IMR-90 (cell line): ENCODE measurements at regions of chrX and their contacts with region 1.

Region 1: DNA sequence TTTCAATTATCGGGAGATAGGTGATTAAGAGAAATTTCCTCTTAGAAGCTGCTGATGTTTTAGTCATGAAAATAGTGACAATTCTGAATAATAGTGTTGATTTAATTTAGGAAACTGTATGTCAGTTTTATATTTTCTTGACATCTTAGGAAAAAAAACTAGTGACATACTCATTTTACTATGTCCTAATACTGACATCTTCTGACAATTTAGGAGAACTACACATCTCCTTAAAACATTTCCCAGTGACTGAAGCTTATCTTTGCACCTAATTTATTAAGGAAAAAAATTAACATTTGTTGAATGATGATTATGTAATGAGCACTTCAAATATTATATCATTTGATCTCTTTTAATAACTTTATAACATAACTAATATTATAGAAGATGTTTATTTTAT is 42.0 kb upstream of the RBMXL3 start:
- DNase-seq: peak; percentile 40
- ATAC-seq: peak; percentile 44; the same call in 1 of the 2 replicates
- H3K4me3 ChIP-seq: no peak overlapping the region
- H3K27ac ChIP-seq: no peak overlapping the region
- H3K4me1 ChIP-seq: no peaks in the 10 kb centered on the region
- H3K27me3 ChIP-seq: no peaks in the 10 kb centered on the region
- CTCF ChIP-seq: peak; percentile 62
- POLR2A ChIP-seq: no peak
- RAD21 ChIP-seq: peak; percentile 60

Region 2: GRCh38 chrX:114611018-114611619 is 536.1 kb before region 1 on chrX:
- CTCF ChIA-PET with region 1: interaction called, 4 read pairs
- POLR2A ChIA-PET with region 1: no interaction called
- dilution Hi-C with region 1: no loop called
- in situ Hi-C with region 1: loop called (anchors 25 kb)
- intact Hi-C with region 1: loop called (anchors 1 kb)
- DNase-seq: peak; percentile 35
- ATAC-seq: peak; percentile 59
- H3K4me3 ChIP-seq: no peak overlapping the region
- H3K27ac ChIP-seq: no peak overlapping the region
- H3K4me1 ChIP-seq: no peaks in the 10 kb centered on the region
- H3K27me3 ChIP-seq: no peaks in the 10 kb centered on the region
- CTCF ChIP-seq: peak; percentile 65
- POLR2A ChIP-seq: no peak
- RAD21 ChIP-seq: peak; percentile 30; the same call in 1 of the 2 replicates

Region 3: GRCh38 chrX:114626323-114626722 is 520.9 kb before region 1 on chrX:
- CTCF ChIA-PET with region 1: no interaction called
- POLR2A ChIA-PET with region 1: no interaction called
- dilution Hi-C with region 1: no loop called
- in situ Hi-C with region 1: loop called (anchors 25 kb)
- intact Hi-C with region 1: loop called (anchors 5 kb)
- DNase-seq: peak; percentile 3
- ATAC-seq: no peak
- H3K4me3 ChIP-seq: no peak overlapping the region
- H3K27ac ChIP-seq: no peak overlapping the region
- H3K4me1 ChIP-seq: no peaks in the 10 kb centered on the region
- H3K27me3 ChIP-seq: no peaks in the 10 kb centered on the region
- CTCF ChIP-seq: peak; percentile 19; the same call in 1 of the 2 replicates
- POLR2A ChIP-seq: no peak
- RAD21 ChIP-seq: 0 out of 2 replicates have a peak, but pooled peaks have one; percentile 10

Region 4: GRCh38 chrX:115191490-115192243 is 44.4 kb after region 1 on chrX:
- CTCF ChIA-PET with region 1: no interaction called
- POLR2A ChIA-PET with region 1: no interaction called
- dilution Hi-C with region 1: no loop called
- in situ Hi-C with region 1: no loop called
- intact Hi-C with region 1: no loop called
- DNase-seq: no peak
- ATAC-seq: no peak
- H3K4me3 ChIP-seq: no peak overlapping the region
- H3K27ac ChIP-seq: no peak overlapping the region
- H3K4me1 ChIP-seq: no peaks in the 10 kb centered on the region
- H3K27me3 ChIP-seq: no peaks in the 10 kb centered on the region
- CTCF ChIP-seq: no peak
- POLR2A ChIP-seq: no peak
- RAD21 ChIP-seq: no peak

Region 5: DNA sequence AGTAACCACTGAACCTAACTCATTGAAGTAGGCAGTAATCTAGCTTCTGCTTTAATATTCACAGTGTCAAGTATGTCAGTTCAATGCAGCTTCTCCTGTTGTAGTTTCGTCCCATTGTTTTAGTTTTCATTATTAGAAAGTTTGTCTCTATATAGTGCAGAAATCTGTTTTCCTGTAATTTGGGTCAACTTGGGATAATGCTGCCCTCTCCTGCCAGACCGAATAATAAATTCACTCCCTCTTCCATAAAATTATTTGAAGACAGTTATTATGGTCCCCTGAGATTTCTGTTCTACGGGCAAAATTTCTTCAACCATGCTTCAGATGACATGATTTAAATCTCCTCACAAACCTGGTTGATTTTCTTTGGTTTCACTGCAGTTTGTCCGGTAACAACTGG is 137.7 kb after region 1 on chrX:
- CTCF ChIA-PET with region 1: interaction called, 3 read pairs
- POLR2A ChIA-PET with region 1: no interaction called
- dilution Hi-C with region 1: no loop called
- in situ Hi-C with region 1: no loop called
- intact Hi-C with region 1: loop called (anchors 5 kb)
- DNase-seq: no peak
- ATAC-seq: no peak
- H3K4me3 ChIP-seq: no peak overlapping the region
- H3K27ac ChIP-seq: no peak overlapping the region
- H3K4me1 ChIP-seq: no peaks in the 10 kb centered on the region
- H3K27me3 ChIP-seq: peaks cover 2% of the 10 kb centered on the region
- CTCF ChIP-seq: peak; percentile 36
- POLR2A ChIP-seq: no peak
- RAD21 ChIP-seq: peak; percentile 40